ENCODE measurements at regions of chr5 and their contacts with region 1.

Region 1: DNA sequence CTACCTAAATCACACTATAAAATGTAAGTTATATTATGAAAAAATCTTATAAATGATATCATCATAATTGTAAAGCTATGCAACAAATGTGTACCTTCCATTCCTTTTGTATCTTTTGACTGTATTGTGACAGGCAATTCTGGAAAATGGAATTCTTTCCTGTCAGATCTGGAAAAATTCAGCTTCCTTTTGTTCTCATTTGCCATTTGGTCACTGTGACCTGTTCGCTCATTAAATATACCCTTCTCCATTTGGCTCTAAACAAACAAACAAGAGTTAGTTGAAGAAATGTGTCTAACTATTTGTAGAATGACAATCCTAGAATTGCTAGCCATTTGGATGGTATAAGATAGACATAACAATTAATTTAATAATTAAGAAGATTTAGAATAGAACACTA is 62.7 kb downstream of the CDKL3 start:
- DNase-seq: no peak
- H3K4me3 ChIP-seq: no peak overlapping the region
- CTCF ChIP-seq: no peak
- POLR2A ChIP-seq: no peak

Region 2: GRCh38 chr5:134188092-134188491 is 116.2 kb before region 1 on chr5:
- intact Hi-C with region 1: no loop called
- DNase-seq: no peak
- H3K4me3 ChIP-seq: no peak overlapping the region
- CTCF ChIP-seq: no peak
- POLR2A ChIP-seq: no peak

Region 3: GRCh38 chr5:134577796-134578363 is 273.6 kb after region 1 on chr5:
- intact Hi-C with region 1: loop called (anchors 5 kb)
- DNase-seq: peak; percentile 66 to 95
- H3K4me3 ChIP-seq: no peak overlapping the region
- CTCF ChIP-seq: peak in 1 of 3 donors; percentile 32
- POLR2A ChIP-seq: no peak

Region 4: DNA sequence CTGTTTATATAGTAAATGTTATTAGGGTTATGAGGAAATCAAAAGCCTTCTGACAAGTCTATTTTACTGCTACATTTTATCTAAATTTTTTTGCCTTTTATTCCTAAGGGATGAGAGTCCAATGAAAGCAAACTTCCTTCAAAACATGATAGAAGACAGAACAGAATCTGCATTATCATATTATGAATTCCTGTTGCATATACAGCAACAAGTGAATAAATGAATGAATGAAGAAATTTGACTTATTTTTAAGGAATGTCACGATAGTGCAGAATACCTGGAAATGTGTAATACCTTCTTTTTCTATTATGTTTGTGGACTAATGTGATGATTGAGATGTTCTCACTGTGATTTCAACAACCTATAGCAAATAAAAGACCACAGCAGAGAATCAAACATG is 420.6 kb after region 1 on chr5:
- intact Hi-C with region 1: loop called (anchors 10 kb)
- DNase-seq: no peak
- H3K4me3 ChIP-seq: no peak overlapping the region
- CTCF ChIP-seq: no peak
- POLR2A ChIP-seq: no peak

Region 5: DNA sequence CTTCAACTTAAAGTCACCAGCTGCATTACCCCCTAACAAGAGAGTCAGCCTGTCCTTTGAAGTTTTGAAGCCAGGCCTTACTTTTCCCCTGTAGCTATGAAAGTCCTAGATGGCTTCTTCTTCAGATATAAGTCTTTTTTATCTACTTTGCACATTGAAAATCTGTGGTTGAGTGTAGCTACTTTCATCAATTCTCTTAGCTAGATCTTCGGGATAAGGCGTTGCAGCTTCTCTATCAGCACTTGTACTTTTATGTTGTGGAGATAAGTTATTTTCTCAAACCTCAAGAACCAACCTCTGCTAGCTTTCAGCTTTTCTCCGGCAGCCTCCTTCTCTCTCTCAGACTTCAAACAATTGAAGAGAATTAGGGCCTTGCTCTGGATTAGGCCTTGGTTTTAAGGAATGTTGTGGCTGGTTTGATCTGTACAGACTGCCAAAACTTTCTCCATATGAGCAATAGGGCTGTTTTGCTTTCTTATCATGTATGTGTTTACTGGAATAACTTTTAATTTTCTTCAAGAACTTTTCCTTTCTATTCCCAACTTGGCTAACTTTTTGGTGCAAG is 685.0 kb after region 1 on chr5:
- intact Hi-C with region 1: no loop called
- DNase-seq: no peak
- H3K4me3 ChIP-seq: no peak overlapping the region
- CTCF ChIP-seq: no peak
- POLR2A ChIP-seq: no peak

Measured in lower leg skin (tissue), 4 donors.